HCT116 (cell line): ENCODE measurements at regions of chr2 and their contacts with region 1.

Region 1: GRCh38 chr2:239267288-239267951 is 133.4 kb downstream of the HDAC4 start:
- DNase-seq: peak; percentile 53
- ATAC-seq: peak; percentile 80
- H3K4me3 ChIP-seq: peak overlapping the region; percentile 44 to 46
- H3K27ac ChIP-seq: peak overlapping the region; percentile 81
- H3K4me1 ChIP-seq: peaks cover 55 to 85% of the 10 kb centered on the region in 2 experiments
- H3K27me3 ChIP-seq: no peaks in the 10 kb centered on the region
- CTCF ChIP-seq: peak in 2 of 3 experiments; percentile 47 to 48; a peak in 4 of 6 replicates
- POLR2A ChIP-seq: no peak
- RAD21 ChIP-seq: no peak

Region 2: GRCh38 chr2:239249776-239250175 is 17.6 kb before region 1 on chr2:
- CTCF ChIA-PET with region 1: interaction called, 3 read pairs
- POLR2A ChIA-PET with region 1: interaction called, 12 read pairs
- RAD21 ChIA-PET with region 1: no interaction called
- intact Hi-C with region 1: loop called (anchors 1 kb)
- DNase-seq: no peak
- ATAC-seq: peak; percentile 44
- H3K4me3 ChIP-seq: peak overlapping the region in 1 of 2 experiments; percentile 27; a peak in 2 of 4 replicates
- H3K27ac ChIP-seq: peak overlapping the region; percentile 95
- H3K4me1 ChIP-seq: peaks cover 70 to 99% of the 10 kb centered on the region in 2 experiments
- H3K27me3 ChIP-seq: no peaks in the 10 kb centered on the region
- CTCF ChIP-seq: no peak
- POLR2A ChIP-seq: no peak
- RAD21 ChIP-seq: no peak

Region 3: GRCh38 chr2:239401067-239401880 is 133.9 kb after region 1 on chr2:
- CTCF ChIA-PET with region 1: no interaction called
- POLR2A ChIA-PET with region 1: no interaction called
- RAD21 ChIA-PET with region 1: no interaction called
- intact Hi-C with region 1: loop called (anchors 5 kb)
- DNase-seq: peak; percentile 95
- ATAC-seq: peak; percentile 94
- H3K4me3 ChIP-seq: peak overlapping the region; percentile 67 to 76
- H3K27ac ChIP-seq: peak overlapping the region; percentile 94
- H3K4me1 ChIP-seq: peaks cover 16 to 27% of the 10 kb centered on the region in 2 experiments
- H3K27me3 ChIP-seq: no peaks in the 10 kb centered on the region
- CTCF ChIP-seq: no peak
- POLR2A ChIP-seq: no peak
- RAD21 ChIP-seq: no peak

Region 4: DNA sequence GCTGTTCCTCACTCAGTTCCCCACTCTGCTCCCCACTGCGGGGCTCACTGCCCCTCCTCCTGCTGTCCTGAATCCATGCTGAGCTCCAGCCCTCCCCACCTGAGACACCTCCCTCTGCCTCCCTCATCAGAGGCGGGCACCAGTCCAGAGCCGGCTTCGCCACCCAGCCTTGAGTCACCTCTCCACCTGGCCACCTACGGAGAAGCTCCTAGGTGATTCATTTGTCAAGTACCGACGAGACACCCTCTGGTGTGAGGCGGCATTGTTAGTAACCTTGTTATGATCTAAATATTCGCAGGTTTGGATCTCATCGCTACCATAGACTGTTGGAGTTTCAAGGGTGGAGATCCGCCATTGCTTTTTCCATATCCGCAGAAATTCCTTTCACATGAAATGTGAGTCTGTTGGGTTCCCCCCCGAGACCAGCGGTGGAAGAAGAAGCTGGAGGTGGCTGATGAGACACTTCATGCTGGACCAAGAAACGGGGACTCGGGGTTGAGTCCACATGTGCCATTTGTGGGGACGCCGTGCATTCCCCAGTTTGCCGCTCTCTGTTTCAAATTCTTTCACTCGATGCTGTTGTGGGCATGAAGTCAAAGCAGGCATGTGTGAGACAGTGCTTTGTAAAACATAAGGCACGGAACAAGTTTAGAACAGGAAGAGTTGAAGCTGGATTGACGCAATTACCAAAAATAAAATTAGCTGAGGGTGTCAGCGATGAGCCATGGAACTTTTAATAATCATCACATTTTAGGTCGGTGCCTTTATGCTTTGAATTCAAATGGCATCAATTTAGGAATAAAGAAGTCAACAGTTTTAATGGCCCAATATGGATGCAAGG is 393.2 kb after region 1 on chr2:
- CTCF ChIA-PET with region 1: no interaction called
- POLR2A ChIA-PET with region 1: no interaction called
- RAD21 ChIA-PET with region 1: interaction called in 1 of 2 experiments, 3 read pairs
- intact Hi-C with region 1: loop called (anchors 5 kb)
- DNase-seq: peak; percentile 71
- ATAC-seq: peak; percentile 95
- H3K4me3 ChIP-seq: peak overlapping the region in 1 of 2 experiments; percentile 37; a peak in 2 of 4 replicates
- H3K27ac ChIP-seq: no peak overlapping the region
- H3K4me1 ChIP-seq: peaks cover 11 to 20% of the 10 kb centered on the region in 2 experiments; a peak in 3 of 4 replicates
- H3K27me3 ChIP-seq: peaks cover 54% of the 10 kb centered on the region
- CTCF ChIP-seq: peak; percentile 8 to 31 (median 15); a peak in 3 of 6 replicates
- POLR2A ChIP-seq: no peak
- RAD21 ChIP-seq: peak; percentile 70

Region 5: GRCh38 chr2:239882331-239882732 is 614.9 kb after region 1 on chr2:
- CTCF ChIA-PET with region 1: no interaction called
- POLR2A ChIA-PET with region 1: no interaction called
- RAD21 ChIA-PET with region 1: no interaction called
- intact Hi-C with region 1: loop called (anchors 5 kb)
- DNase-seq: peak; percentile 55
- ATAC-seq: peak; percentile 97
- H3K4me3 ChIP-seq: no peak overlapping the region
- H3K27ac ChIP-seq: no peak overlapping the region
- H3K4me1 ChIP-seq: no peaks in the 10 kb centered on the region
- H3K27me3 ChIP-seq: no peaks in the 10 kb centered on the region
- CTCF ChIP-seq: peak; percentile 57 to 77 (median 72); a peak in 5 of 6 replicates
- POLR2A ChIP-seq: no peak
- RAD21 ChIP-seq: peak; percentile 77

Region 6: DNA sequence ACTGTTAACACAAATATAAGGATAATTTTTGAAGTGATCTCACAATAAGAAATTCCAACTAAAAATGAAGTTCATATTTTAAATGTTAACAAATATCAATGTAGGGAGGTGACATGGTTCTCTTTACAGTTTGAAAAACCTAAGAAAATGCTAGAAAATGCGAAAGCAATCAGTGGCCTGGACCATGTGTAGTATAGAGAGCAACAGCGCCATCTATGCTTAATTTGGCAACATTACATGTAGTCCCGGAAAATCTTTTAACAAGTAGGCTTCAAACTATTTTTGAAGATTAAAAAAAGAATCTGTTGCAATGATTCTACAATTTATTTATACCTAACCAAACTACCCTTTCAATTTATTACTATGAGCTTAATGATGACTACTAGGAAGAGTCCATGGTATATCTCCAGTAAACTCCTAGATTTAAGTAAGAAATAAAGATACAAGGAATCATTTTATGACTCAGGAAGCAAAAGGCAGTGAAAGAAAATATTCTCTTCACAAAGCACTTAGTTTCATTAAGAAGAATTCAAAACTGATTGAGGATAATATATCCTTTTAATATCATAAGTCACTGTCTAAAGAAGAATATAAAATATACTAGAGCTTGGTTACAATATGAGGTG is 724.4 kb after region 1 on chr2:
- CTCF ChIA-PET with region 1: no interaction called
- POLR2A ChIA-PET with region 1: no interaction called
- RAD21 ChIA-PET with region 1: no interaction called
- intact Hi-C with region 1: loop called (anchors 5 kb)
- DNase-seq: peak; percentile 27
- ATAC-seq: peak; percentile 70
- H3K4me3 ChIP-seq: no peak overlapping the region
- H3K27ac ChIP-seq: no peak overlapping the region
- H3K4me1 ChIP-seq: no peaks in the 10 kb centered on the region
- H3K27me3 ChIP-seq: no peaks in the 10 kb centered on the region
- CTCF ChIP-seq: peak; percentile 62 to 89 (median 72); a peak in 5 of 6 replicates
- POLR2A ChIP-seq: no peak
- RAD21 ChIP-seq: peak; percentile 76